Psoas muscle (tissue), 8 donors: ENCODE measurements at regions of chr2 and their contacts with region 1.

Region 1: GRCh38 chr2:62672601-62673000 is 32.9 kb upstream of the EHBP1 start:
- DNase-seq: no peak
- ATAC-seq: no peak
- H3K4me3 ChIP-seq: no peak overlapping the region
- H3K27ac ChIP-seq: no peak overlapping the region
- H3K4me1 ChIP-seq: no peaks in the 10 kb centered on the region
- H3K27me3 ChIP-seq: no peaks in the 10 kb centered on the region
- CTCF ChIP-seq: no peak

Region 2: DNA sequence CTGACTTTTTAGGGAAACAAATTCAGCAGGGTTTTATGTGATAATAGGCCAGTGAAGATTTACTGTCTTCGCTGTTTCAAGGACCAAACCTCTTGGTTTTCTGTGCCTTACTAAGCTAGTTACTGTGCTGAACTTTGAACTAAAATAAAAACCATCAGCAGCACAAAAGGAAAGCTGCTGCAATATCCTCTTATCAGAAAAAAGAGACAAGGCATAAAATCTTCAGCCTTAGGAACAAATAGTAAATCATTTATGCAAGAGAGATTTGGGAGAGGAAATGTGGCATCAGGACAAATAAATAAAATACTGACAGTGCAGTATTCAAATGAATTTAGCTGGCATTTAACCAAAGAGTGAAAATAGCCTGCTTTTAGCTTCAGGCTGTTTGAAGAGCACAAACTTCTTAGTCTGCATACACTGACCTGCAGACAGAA is 31.2 kb before region 1 on chr2:
- intact Hi-C with region 1: loop called in 1 of 2 experiments (anchors 1 kb)
- DNase-seq: no peak
- ATAC-seq: no peak
- H3K4me3 ChIP-seq: no peak overlapping the region
- H3K27ac ChIP-seq: no peak overlapping the region
- H3K4me1 ChIP-seq: no peaks in the 10 kb centered on the region
- H3K27me3 ChIP-seq: no peaks in the 10 kb centered on the region
- CTCF ChIP-seq: no peak

Region 3: DNA sequence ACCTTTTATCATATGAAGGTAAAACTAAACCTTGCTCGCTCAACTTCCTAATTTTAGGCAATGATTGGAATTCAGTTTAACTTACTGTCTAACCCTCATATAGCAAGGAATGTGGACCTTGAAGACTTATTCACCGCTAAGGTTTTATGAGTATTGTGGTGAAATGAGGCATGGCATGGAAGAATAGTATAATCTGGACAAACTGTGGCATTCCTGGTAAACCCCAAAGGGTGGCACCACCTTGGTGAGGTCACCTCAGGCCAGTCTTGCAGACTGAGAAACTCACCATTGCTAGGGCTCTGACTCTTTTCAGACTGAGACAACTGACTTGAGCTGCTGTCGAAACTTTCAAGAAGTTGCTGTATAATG is 18.2 kb before region 1 on chr2:
- intact Hi-C with region 1: no loop called
- DNase-seq: no peak
- ATAC-seq: no peak
- H3K4me3 ChIP-seq: no peak overlapping the region
- H3K27ac ChIP-seq: no peak overlapping the region
- H3K4me1 ChIP-seq: peaks cover under 1% of the 10 kb centered on the region
- H3K27me3 ChIP-seq: no peaks in the 10 kb centered on the region
- CTCF ChIP-seq: no peak

Region 4: GRCh38 chr2:62736899-62737559 is 64.4 kb after region 1 on chr2:
- intact Hi-C with region 1: no loop called
- DNase-seq: no peak
- ATAC-seq: no peak
- H3K4me3 ChIP-seq: no peak overlapping the region
- H3K27ac ChIP-seq: no peak overlapping the region
- H3K4me1 ChIP-seq: no peaks in the 10 kb centered on the region
- H3K27me3 ChIP-seq: no peaks in the 10 kb centered on the region
- CTCF ChIP-seq: no peak